GM23248 (cell line): ENCODE measurements at regions of chr1 and their contacts with region 1.

Region 1: GRCh38 chr1:36297062-36297461 is 9.1 kb upstream of the SH3D21 start:
- DNase-seq: no peak
- H3K4me3 ChIP-seq: no peak overlapping the region
- H3K27ac ChIP-seq: no peak overlapping the region
- H3K4me1 ChIP-seq: peaks cover 13% of the 10 kb centered on the region
- H3K27me3 ChIP-seq: no peaks in the 10 kb centered on the region

Region 2: GRCh38 chr1:36099681-36100341 is 197.3 kb before region 1 on chr1:
- in situ Hi-C with region 1: loop called (anchors 10 kb)
- DNase-seq: peak; percentile 79
- H3K4me3 ChIP-seq: no peak overlapping the region
- H3K27ac ChIP-seq: no peak overlapping the region
- H3K4me1 ChIP-seq: 0 out of 2 replicates have a peak, but pooled peaks cover 3% of the 10 kb centered on the region
- H3K27me3 ChIP-seq: no peaks in the 10 kb centered on the region